Natural killer cell (primary cell): ENCODE measurements at regions of chr1 and their contacts with region 1.

Region 1: GRCh38 chr1:164774819-164775654 is 216.1 kb downstream of the PBX1 start:
- DNase-seq: peak; percentile 15 to 36
- ATAC-seq: peak; percentile 70 to 87 (median 73)
- H3K4me3 ChIP-seq: no peak overlapping the region
- H3K4me3 Mint-ChIP-seq: peak overlapping the region; percentile 73
- H3K27ac ChIP-seq: no peak overlapping the region
- H3K27ac Mint-ChIP-seq: peak overlapping the region; percentile 67 to 73
- H3K4me1 ChIP-seq: peaks cover 27% of the 10 kb centered on the region
- H3K4me1 Mint-ChIP-seq: peaks cover 40 to 51% of the 10 kb centered on the region in 2 donors
- H3K27me3 ChIP-seq: peaks cover 30% of the 10 kb centered on the region
- H3K27me3 Mint-ChIP-seq: peaks cover 56 to 75% of the 10 kb centered on the region in 2 donors
- CTCF ChIP-seq: no peak

Region 2: DNA sequence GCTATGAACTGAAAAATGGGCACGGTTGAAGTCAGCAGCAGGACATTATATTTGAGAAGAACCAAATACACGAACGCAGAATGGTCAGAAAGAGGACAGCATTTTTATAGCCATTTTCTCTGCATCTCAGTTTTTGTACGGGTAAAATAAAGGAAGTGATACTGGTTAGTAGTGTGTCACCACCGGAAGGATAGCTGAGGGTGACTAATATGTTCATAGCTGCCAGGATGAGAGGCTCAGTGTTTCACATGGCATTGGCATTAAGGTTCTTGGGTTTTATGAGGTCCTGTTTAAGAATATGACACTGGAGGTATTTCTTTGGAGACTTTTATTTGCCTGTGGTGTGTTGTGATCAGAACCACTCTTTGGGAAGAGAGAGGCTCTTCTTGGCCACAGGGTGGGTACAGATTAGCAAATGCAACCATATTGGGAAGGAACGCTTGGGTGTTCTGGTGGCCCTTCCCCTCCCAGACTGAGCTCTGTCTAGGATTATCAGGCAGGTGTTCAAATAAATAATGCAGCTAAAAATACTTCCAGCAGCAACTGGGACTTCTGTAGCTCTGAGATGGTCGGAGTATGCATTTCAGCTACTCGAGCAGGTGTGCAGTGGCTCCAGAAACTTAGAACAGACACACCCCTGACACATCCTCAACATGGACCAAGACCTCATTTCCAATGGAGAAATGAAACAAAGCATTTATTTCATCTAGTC is 57.9 kb before region 1 on chr1:
- intact Hi-C with region 1: loop called (anchors 2 kb)
- DNase-seq: peak in 1 of 2 donors; percentile 6
- ATAC-seq: peak; percentile 81 to 97 (median 96)
- H3K4me3 ChIP-seq: no peak overlapping the region
- H3K4me3 Mint-ChIP-seq: peak overlapping the region; percentile 41
- H3K27ac ChIP-seq: no peak overlapping the region
- H3K27ac Mint-ChIP-seq: peak overlapping the region in 1 of 2 donors; percentile 74
- H3K4me1 ChIP-seq: peaks cover 29% of the 10 kb centered on the region
- H3K4me1 Mint-ChIP-seq: peaks cover 45 to 55% of the 10 kb centered on the region in 2 donors
- H3K27me3 ChIP-seq: peaks cover 5% of the 10 kb centered on the region
- H3K27me3 Mint-ChIP-seq: peaks cover 12 to 43% of the 10 kb centered on the region in 2 donors
- CTCF ChIP-seq: no peak

Region 3: GRCh38 chr1:164754088-164754600 is 20.9 kb before region 1 on chr1:
- intact Hi-C with region 1: no loop called
- DNase-seq: no peak
- ATAC-seq: no peak
- H3K4me3 ChIP-seq: no peak overlapping the region
- H3K4me3 Mint-ChIP-seq: no peak overlapping the region
- H3K27ac ChIP-seq: no peak overlapping the region
- H3K27ac Mint-ChIP-seq: no peak overlapping the region
- H3K4me1 ChIP-seq: no peaks in the 10 kb centered on the region
- H3K4me1 Mint-ChIP-seq: no peaks in the 10 kb centered on the region
- H3K27me3 ChIP-seq: no peaks in the 10 kb centered on the region
- H3K27me3 Mint-ChIP-seq: peaks cover 32 to 43% of the 10 kb centered on the region in 2 donors
- CTCF ChIP-seq: no peak

Region 4: GRCh38 chr1:164803366-164803765 is 28.3 kb after region 1 on chr1:
- intact Hi-C with region 1: no loop called
- DNase-seq: no peak
- ATAC-seq: peak in 2 of 3 donors; percentile 37
- H3K4me3 ChIP-seq: no peak overlapping the region
- H3K4me3 Mint-ChIP-seq: no peak overlapping the region
- H3K27ac ChIP-seq: no peak overlapping the region
- H3K27ac Mint-ChIP-seq: no peak overlapping the region
- H3K4me1 ChIP-seq: no peaks in the 10 kb centered on the region
- H3K4me1 Mint-ChIP-seq: peaks cover 0 to 8% of the 10 kb centered on the region in 2 donors
- H3K27me3 ChIP-seq: no peaks in the 10 kb centered on the region
- H3K27me3 Mint-ChIP-seq: peaks cover 0 to 19% of the 10 kb centered on the region in 2 donors
- CTCF ChIP-seq: no peak